ENCODE measurements at regions of chr5 and their contacts with region 1.

Region 1: GRCh38 chr5:32329308-32329834 is 16.6 kb upstream of the MTMR12 start:
- DNase-seq: peak; percentile 60 to 72
- H3K4me3 ChIP-seq: no peak overlapping the region
- H3K27ac ChIP-seq: no peak overlapping the region
- H3K4me1 ChIP-seq: peaks cover 14% of the 10 kb centered on the region
- H3K27me3 ChIP-seq: no peaks in the 10 kb centered on the region
- CTCF ChIP-seq: peak; percentile 83

Region 2: DNA sequence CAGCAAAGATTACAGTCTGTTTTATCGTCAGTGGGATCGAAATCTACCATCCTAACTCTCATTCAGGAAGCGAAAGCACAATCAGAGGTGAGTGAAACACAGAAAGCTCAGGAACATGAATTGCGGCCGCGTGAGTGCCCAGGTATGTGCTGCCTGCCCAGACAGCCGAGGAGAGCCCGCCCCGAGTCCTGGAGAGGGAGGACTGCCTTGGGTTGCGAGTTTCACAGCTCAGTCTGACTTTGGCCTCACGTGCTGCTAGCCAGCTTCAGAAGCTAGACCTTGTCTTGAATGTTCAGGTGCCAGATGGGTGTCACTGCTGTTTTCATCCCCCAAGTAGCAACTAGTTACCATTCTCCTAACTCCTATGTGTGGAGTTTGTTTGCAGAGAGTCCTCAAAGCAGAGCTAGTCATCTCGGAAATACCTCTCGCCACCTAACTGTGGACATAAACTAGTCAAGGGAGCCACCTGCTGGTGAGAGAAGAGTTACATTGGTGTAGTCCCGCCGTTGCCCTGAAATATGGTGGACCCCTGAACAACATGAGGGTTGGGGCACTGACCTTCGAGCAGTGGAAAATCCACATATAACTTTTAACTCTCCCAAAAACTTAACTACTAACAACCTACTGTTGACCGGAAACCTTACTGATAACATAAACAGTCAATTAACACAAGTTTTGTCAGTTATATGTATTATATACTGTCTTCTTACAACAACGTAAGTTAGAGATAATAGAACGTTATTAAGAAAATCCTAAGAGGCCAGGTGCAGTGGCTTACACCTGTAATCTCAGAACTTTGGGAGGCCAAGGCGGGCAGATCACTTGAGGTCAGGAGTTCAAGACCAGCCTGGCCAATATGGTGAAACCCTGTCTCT is 236.2 kb before region 1 on chr5:
- CTCF ChIA-PET with region 1: interaction called, 4 read pairs
- POLR2A ChIA-PET with region 1: no interaction called
- intact Hi-C with region 1: loop called (anchors 5 kb)
- DNase-seq: peak; percentile 63 to 75
- H3K4me3 ChIP-seq: no peak overlapping the region
- H3K27ac ChIP-seq: no peak overlapping the region
- H3K4me1 ChIP-seq: no peaks in the 10 kb centered on the region
- H3K27me3 ChIP-seq: no peaks in the 10 kb centered on the region
- CTCF ChIP-seq: peak; percentile 93

Region 3: GRCh38 chr5:32109236-32109635 is 220.1 kb before region 1 on chr5:
- CTCF ChIA-PET with region 1: interaction called, 9 read pairs
- POLR2A ChIA-PET with region 1: no interaction called
- intact Hi-C with region 1: loop called (anchors 5 kb)
- DNase-seq: no peak
- H3K4me3 ChIP-seq: no peak overlapping the region
- H3K27ac ChIP-seq: no peak overlapping the region
- H3K4me1 ChIP-seq: no peaks in the 10 kb centered on the region
- H3K27me3 ChIP-seq: no peaks in the 10 kb centered on the region
- CTCF ChIP-seq: no peak

Region 4: DNA sequence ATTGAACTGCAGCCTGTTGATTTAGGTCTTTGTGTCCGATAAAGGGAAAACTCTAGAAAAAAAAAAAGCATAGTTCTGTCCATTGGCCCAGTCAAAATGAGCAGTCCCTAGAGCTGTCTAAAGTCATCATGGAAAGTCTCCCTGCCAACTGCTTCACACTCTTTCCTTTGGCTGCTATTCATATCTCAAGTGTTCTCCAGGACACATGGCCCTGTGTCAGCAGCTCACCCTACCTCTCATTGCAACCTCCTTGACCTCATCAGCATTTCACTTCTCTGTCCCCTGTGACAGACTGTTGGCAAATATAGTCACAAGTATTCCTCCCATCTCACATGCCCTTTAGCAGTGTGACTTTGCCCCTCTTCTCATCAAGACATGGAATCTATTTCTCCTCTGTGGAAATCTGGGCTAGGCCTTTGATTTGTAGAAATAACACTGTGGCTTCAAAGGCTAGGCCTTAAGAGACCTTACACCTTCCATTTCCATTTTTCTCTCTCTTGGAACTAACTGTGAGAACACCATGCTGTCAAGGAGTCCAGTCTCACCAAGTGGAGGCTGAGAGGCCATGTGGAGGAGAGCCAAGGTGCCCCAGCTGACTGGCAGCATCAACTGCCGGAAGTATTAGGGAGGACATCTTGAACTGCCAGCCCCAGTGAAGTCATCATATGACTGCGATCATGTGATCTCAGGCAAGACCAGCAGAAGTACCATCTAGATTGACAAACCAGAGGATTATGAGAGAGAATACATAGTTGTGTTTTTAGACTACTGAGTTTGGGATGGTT is 962.0 kb after region 1 on chr5:
- CTCF ChIA-PET with region 1: no interaction called
- POLR2A ChIA-PET with region 1: no interaction called
- intact Hi-C with region 1: no loop called
- DNase-seq: no peak
- H3K4me3 ChIP-seq: no peak overlapping the region
- H3K27ac ChIP-seq: no peak overlapping the region
- H3K4me1 ChIP-seq: no peaks in the 10 kb centered on the region
- H3K27me3 ChIP-seq: no peaks in the 10 kb centered on the region
- CTCF ChIP-seq: no peak